ENCODE measurements at regions of chr15 and their contacts with region 1.

Region 1: DNA sequence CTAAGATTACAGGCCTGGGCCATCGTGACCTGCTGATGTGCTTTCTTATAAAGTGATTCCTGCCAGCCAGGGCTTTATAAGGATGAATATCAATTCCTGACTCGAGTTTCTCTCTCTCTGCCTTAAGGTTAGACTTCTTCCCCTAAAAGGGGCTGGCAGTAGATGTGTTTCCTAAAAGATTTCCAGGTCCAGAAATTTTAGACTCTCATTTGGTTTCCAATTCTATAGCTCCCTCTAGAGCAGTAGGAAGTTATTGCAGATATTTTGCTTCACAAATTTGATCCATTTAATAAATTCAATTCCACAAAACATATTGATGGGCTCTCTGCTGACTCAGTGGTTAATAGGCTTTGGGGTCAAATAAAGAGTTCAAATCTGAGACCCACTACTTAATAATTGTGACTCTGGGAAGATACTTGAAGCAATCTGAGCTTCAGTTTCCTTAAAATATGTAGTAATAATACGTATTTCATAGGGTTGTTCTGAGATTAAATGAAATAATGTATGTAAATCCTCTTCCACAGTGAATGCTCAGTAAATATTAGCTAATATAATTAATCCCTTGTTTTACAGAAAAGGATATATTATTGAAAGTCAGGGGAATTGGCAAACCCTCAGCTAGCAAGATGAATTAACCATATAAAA is 2.1 kb downstream of the TRIM69 start:
- DNase-seq: no peak
- H3K4me3 ChIP-seq: no peak overlapping the region
- CTCF ChIP-seq: peak; percentile 25

Region 2: GRCh38 chr15:44584162-44584749 is 154.2 kb before region 1 on chr15:
- CTCF ChIA-PET with region 1: interaction called, 86 read pairs
- POLR2A ChIA-PET with region 1: no interaction called
- DNase-seq: no peak
- H3K4me3 ChIP-seq: no peak overlapping the region
- CTCF ChIP-seq: peak; percentile 50

Region 3: GRCh38 chr15:44647036-44647435 is 91.4 kb before region 1 on chr15:
- CTCF ChIA-PET with region 1: interaction called, 25 read pairs
- POLR2A ChIA-PET with region 1: no interaction called
- DNase-seq: no peak
- H3K4me3 ChIP-seq: no peak overlapping the region
- CTCF ChIP-seq: no peak

Region 4: GRCh38 chr15:44711356-44712107 is 26.9 kb before region 1 on chr15 and contains the start of gene B2M:
- CTCF ChIA-PET with region 1: interaction called, 85 read pairs
- POLR2A ChIA-PET with region 1: interaction called, 5 read pairs
- DNase-seq: peak; percentile 83
- H3K4me3 ChIP-seq: peak within 1 kb of the TSS; percentile 99
- CTCF ChIP-seq: no peak

Region 5: GRCh38 chr15:44763187-44763586 is 24.7 kb after region 1 on chr15:
- CTCF ChIA-PET with region 1: interaction called, 12 read pairs
- POLR2A ChIA-PET with region 1: no interaction called
- DNase-seq: no peak
- H3K4me3 ChIP-seq: no peak overlapping the region
- CTCF ChIP-seq: no peak

Region 6: GRCh38 chr15:45198337-45199135 is 460.1 kb after region 1 on chr15:
- CTCF ChIA-PET with region 1: no interaction called
- POLR2A ChIA-PET with region 1: no interaction called
- DNase-seq: peak; percentile 87
- H3K4me3 ChIP-seq: peak overlapping the region; percentile 92
- CTCF ChIP-seq: peak; percentile 87